Activated T-helper 2 cell treated with anti-CD3 and anti-CD28 coated beads, Interferon-gamma antibody, Interleukin-2, Interleukin-4, amounts not matched to agents 10 μg/mL and 5 μg/mL and 100 μg/mL, durations not matched to agents 14 hours and 24 hours and 36 hours (primary cell): ENCODE measurements at regions of chr10 and their contacts with region 1.

Region 1: DNA sequence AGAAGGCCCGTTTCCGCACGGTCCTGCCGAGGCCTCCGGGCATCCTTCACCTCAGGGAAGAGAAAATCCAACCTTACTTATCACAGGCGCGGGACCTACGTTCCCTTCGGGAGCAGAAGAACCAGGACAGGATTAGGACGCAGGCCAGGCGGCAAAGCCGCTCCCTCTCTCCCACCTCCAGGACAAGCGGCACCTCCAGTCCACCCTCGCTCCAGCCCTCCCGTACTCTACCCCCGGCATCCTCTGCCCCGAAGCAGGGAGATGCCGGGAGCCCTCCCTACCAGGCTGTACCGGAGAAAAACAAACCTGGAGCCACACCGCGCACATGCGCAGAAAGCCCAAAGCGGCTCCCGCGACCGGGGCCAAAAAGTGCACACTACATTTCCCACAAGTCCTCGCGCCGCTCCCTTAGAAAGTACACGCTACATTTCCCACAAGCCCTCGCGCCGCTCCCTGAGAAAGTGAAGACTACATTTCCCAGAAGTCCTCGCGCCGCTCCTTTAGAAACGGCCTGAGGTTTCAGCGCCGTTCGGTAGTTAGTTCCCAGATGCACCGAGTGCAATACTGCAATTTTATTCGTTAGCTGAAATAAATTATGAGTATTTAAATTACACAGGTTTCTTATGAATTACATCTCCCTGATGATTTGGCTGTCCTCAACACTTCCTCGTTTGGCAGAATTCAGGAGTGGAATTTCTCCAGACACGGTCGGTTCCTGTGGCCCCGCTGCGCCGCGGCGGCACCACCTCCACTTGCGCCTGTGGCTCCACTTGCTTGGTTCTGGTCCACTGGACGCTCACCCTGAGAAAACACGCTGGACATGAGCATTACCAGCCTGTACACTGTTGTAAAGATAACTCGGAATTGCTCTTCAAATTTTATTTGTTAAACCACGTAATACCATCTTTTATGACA is 85.6 kb downstream of the ZNF33B start:
- DNase-seq: peak; percentile 94
- H3K4me3 Mint-ChIP-seq: peak overlapping the region; percentile 93
- H3K27ac Mint-ChIP-seq: peak overlapping the region; percentile 93
- H3K4me1 Mint-ChIP-seq: peaks cover 27% of the 10 kb centered on the region
- H3K27me3 Mint-ChIP-seq: no peaks in the 10 kb centered on the region

Region 2: GRCh38 chr10:42491001-42491592 is 61.7 kb before region 1 on chr10:
- intact Hi-C with region 1: no loop called
- DNase-seq: no peak
- H3K4me3 Mint-ChIP-seq: no peak overlapping the region
- H3K27ac Mint-ChIP-seq: no peak overlapping the region
- H3K4me1 Mint-ChIP-seq: no peaks in the 10 kb centered on the region
- H3K27me3 Mint-ChIP-seq: no peaks in the 10 kb centered on the region

Region 3: DNA sequence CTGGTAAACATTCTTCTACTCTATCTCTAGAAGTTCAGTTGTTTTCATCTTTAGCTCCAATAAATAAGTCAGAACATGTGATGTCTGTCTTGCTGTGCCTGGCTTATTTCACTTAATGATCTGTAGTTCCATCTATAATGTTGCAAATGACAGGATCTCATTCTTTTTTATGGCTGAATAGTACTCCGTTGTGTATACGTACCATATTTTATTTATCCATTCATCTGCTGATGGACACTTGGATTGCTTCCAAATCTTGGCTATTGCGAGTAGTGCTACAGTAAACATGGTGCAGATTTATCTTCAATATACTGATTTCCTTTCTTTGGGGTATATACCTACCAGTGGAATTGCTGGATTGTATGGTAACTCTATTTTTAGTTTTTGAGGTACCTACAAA is 38.8 kb before region 1 on chr10:
- intact Hi-C with region 1: no loop called
- DNase-seq: no peak
- H3K4me3 Mint-ChIP-seq: no peak overlapping the region
- H3K27ac Mint-ChIP-seq: no peak overlapping the region
- H3K4me1 Mint-ChIP-seq: no peaks in the 10 kb centered on the region
- H3K27me3 Mint-ChIP-seq: no peaks in the 10 kb centered on the region

Region 4: GRCh38 chr10:42638055-42638820 is 85.5 kb after region 1 on chr10 and contains the start of gene ZNF33B:
- intact Hi-C with region 1: loop called (anchors 1 kb)
- DNase-seq: peak; percentile 95
- H3K4me3 Mint-ChIP-seq: peak within 1 kb of the TSS; percentile 96
- H3K27ac Mint-ChIP-seq: peak within 1 kb of the TSS; percentile 98
- H3K4me1 Mint-ChIP-seq: peaks cover 25% of the 10 kb centered on the region
- H3K27me3 Mint-ChIP-seq: no peaks in the 10 kb centered on the region
- total RNA-seq, gene ZNF33B: 6.3 and 6.5 TPM in 2 replicates

Region 5: DNA sequence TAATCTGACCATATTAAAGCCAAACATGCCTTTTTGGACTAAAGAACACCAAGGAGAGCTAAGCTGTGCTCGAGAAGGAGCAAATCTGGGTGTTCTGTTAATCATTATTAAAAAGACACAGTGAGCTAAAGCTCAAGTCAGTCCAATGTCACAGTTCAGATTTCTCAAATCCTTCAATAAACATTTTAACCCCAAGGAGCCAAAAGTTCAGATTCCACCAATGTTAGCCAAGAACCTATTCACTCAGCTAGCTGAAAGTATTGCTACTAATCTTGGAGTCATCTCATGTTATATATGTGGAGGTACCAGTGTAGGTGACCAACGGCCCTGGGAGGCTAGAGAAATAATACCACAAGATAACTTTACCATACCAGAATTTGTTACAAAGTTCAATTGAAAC is 100.1 kb after region 1 on chr10:
- intact Hi-C with region 1: no loop called
- DNase-seq: no peak
- H3K4me3 Mint-ChIP-seq: no peak overlapping the region
- H3K27ac Mint-ChIP-seq: no peak overlapping the region
- H3K4me1 Mint-ChIP-seq: peaks cover 5% of the 10 kb centered on the region
- H3K27me3 Mint-ChIP-seq: no peaks in the 10 kb centered on the region

Region 6: GRCh38 chr10:43120929-43121314 is 568.2 kb after region 1 on chr10:
- intact Hi-C with region 1: loop called (anchors 5 kb)
- DNase-seq: peak; percentile 72
- H3K4me3 Mint-ChIP-seq: peak overlapping the region; percentile 53
- H3K27ac Mint-ChIP-seq: peak overlapping the region; percentile 88
- H3K4me1 Mint-ChIP-seq: peaks cover 33% of the 10 kb centered on the region
- H3K27me3 Mint-ChIP-seq: no peaks in the 10 kb centered on the region